Activated naive CD4-positive, alpha-beta T cell treated with anti-CD3 and anti-CD28 coated beads for 36 hours (primary cell): ENCODE measurements at regions of chr1 and their contacts with region 1.

Region 1: GRCh38 chr1:114511032-114511785 is at the start of gene TRIM33:
- DNase-seq: peak; percentile 92
- H3K4me3 Mint-ChIP-seq: peak within 1 kb of the TSS; percentile 90
- H3K27ac Mint-ChIP-seq: peak within 1 kb of the TSS; percentile 99
- H3K4me1 Mint-ChIP-seq: peaks cover 48% of the 10 kb centered on the region
- H3K27me3 Mint-ChIP-seq: no peaks in the 10 kb centered on the region
- total RNA-seq, gene TRIM33: 23.1 to 25.0 TPM

Region 2: GRCh38 chr1:113675332-113675731 is 835.9 kb before region 1 on chr1:
- CTCF ChIA-PET with region 1: no interaction called
- intact Hi-C with region 1: no loop called
- DNase-seq: no peak
- H3K4me3 Mint-ChIP-seq: no peak overlapping the region
- H3K27ac Mint-ChIP-seq: no peak overlapping the region
- H3K4me1 Mint-ChIP-seq: no peaks in the 10 kb centered on the region
- H3K27me3 Mint-ChIP-seq: no peaks in the 10 kb centered on the region

Region 3: DNA sequence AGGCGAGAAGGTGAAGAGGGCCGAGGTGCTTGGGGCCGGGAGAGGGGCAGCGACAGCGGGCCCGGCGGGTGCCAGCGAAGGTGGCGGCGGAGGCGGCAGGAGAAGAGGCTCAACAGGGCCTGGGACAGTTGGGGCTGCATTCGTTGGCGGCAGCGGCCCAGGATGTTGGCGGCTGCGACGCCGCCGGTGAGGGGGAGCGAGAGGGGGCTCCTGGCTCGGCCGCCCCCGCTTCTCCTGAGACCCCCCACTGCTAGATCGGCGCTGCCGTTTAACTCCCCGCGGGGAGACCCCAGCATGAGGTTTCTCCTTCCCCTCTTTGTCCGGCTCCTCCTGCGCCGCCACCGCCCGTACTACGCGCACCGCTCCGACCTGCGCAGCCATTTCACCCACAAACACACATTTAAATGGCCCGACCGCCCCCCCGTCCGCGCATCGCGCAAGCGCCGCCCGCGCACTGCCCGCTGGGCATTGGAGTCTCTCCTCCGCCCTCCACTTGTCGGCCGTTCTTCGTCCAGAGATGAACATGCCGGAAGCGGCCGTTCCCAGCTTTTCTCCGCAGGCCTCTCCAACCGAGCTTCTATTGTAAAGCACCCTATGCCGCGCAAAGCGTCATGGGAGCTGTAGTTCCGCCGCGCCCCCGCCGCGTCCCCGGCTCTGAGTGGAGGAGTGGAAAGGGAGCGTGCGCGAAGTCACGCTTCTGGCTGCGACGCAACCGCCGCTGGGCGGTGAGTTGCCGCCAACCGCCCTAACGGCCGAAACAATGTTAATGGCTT is 699.1 kb before region 1 on chr1 and contains the start of gene RSBN1:
- CTCF ChIA-PET with region 1: no interaction called
- intact Hi-C with region 1: loop called (anchors 1 kb)
- DNase-seq: peak; percentile 99
- H3K4me3 Mint-ChIP-seq: peak within 1 kb of the TSS; percentile 98
- H3K27ac Mint-ChIP-seq: peak within 1 kb of the TSS; percentile 94
- H3K4me1 Mint-ChIP-seq: peaks cover 31% of the 10 kb centered on the region
- H3K27me3 Mint-ChIP-seq: no peaks in the 10 kb centered on the region
- total RNA-seq, gene RSBN1: 13.6 to 14.3 TPM

Region 4: GRCh38 chr1:114482204-114482980 is 28.8 kb before region 1 on chr1:
- CTCF ChIA-PET with region 1: no interaction called
- intact Hi-C with region 1: loop called (anchors 2 kb)
- DNase-seq: peak; percentile 48
- H3K4me3 Mint-ChIP-seq: peak overlapping the region; percentile 34
- H3K27ac Mint-ChIP-seq: peak overlapping the region; percentile 82
- H3K4me1 Mint-ChIP-seq: peaks cover 44% of the 10 kb centered on the region
- H3K27me3 Mint-ChIP-seq: no peaks in the 10 kb centered on the region

Region 5: DNA sequence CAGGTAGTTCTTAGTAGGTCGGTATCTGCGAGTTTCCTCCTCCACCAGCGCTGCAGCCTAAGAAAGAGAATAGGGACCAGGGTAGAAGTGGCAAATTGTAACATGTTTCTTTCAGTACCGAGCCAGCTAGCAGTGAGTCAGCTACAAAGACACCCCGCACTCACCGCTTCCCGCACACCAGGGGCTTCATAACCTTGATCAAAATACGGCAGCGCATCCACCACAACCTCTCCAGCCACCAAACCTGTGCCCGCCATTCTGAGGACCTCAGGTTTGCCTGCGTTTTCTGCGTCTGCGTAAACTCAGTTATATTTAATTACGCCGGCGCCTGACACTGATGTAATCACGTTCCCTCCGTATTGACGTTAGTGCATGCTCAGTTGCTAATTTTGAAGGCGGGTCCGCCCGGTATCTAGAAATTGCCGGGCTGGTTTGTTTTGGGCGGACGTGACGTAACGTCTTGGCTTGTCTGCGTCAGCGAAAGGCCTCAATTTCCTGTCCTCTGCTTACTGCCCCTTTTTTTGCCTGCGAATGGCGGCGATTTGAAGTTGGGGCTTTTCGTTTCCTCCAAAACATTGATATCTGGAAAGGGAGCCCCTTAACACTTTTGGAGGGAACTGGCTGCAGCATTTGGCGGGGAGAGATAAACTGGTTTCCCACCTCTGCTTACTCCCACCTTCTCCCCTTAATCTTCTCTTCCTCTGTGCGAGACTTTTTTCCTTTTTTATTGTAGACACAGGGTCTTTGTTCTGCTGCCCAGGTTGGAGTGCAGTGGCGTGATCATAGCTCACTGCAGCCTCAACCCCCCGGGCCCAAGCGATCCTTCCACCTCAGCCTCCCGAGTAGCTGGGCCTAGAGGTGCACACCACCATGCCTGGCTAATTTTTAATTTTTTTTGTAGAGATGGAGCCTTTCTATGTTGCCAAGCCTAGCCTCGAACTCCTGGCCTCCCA is 70.4 kb after region 1 on chr1 and contains the start of gene BCAS2:
- CTCF ChIA-PET with region 1: interaction called, 3 read pairs
- intact Hi-C with region 1: loop called (anchors 1 kb)
- DNase-seq: peak; percentile 99
- H3K4me3 Mint-ChIP-seq: peak within 1 kb of the TSS; percentile 99
- H3K27ac Mint-ChIP-seq: peak within 1 kb of the TSS; percentile 96
- H3K4me1 Mint-ChIP-seq: peaks cover 32% of the 10 kb centered on the region
- H3K27me3 Mint-ChIP-seq: no peaks in the 10 kb centered on the region
- total RNA-seq, gene BCAS2: 46.5 to 48.0 TPM

Region 6: GRCh38 chr1:114716304-114717170 is 205.3 kb after region 1 on chr1 and contains the start of gene NRAS:
- CTCF ChIA-PET with region 1: no interaction called
- intact Hi-C with region 1: loop called (anchors 1 kb)
- DNase-seq: peak; percentile 96
- H3K4me3 Mint-ChIP-seq: peak within 1 kb of the TSS; percentile 98
- H3K27ac Mint-ChIP-seq: peak within 1 kb of the TSS; percentile 99
- H3K4me1 Mint-ChIP-seq: peaks cover 27% of the 10 kb centered on the region
- H3K27me3 Mint-ChIP-seq: no peaks in the 10 kb centered on the region
- total RNA-seq, gene NRAS: 42.1 to 43.9 TPM

Region 7: GRCh38 chr1:115062542-115063011 is 551.4 kb after region 1 on chr1:
- CTCF ChIA-PET with region 1: no interaction called
- intact Hi-C with region 1: loop called (anchors 2 kb)
- DNase-seq: peak; percentile 96
- H3K4me3 Mint-ChIP-seq: no peak overlapping the region
- H3K27ac Mint-ChIP-seq: peak overlapping the region; percentile 74
- H3K4me1 Mint-ChIP-seq: peaks cover 41% of the 10 kb centered on the region
- H3K27me3 Mint-ChIP-seq: no peaks in the 10 kb centered on the region